Esophagus muscularis mucosa (tissue), 4 donors: ENCODE measurements at regions of chr5 and their contacts with region 1.

Region 1: DNA sequence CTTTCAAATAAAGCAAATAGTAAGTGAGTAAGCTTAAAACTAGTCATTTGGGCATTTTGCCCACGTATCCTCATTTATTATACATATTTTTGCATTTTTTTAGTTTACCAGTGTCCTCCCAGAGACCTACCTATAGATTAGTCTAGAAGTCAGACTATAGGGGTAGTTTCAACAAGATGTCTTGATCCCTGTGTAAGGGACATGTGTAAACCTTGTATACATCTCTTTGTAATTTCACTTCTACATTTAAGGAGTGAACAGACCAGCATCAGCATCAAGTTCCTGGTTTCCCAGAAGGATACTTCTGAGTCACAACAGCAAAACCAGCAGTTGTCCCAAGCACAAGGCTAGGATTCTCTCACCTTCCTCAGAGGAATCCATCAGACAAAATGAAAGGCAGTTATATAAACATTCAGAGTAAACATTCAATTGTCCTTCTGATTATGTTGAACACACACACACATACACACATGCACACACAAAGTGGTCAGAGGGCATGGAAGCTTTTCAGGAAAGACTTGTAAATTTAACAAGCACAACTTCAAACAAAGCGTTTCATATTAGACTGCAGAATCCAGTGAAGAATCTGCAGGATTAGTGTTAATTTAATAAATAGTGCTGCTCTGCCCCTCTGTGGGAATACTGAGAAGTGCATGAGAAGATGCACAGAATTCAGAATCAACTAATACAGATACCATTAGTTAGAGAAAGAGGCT is 55.4 kb downstream of the HINT1 start:
- DNase-seq: no peak
- H3K4me3 ChIP-seq: no peak overlapping the region
- H3K27ac ChIP-seq: no peak overlapping the region
- H3K4me1 ChIP-seq: no peaks in the 10 kb centered on the region
- H3K27me3 ChIP-seq: peaks cover 0 to 7% (median 0%) of the 10 kb centered on the region in 4 donors
- CTCF ChIP-seq: peak; percentile 55 to 71 (median 61)
- EP300 ChIP-seq: no peak
- POLR2A ChIP-seq: no peak

Region 2: GRCh38 chr5:129904102-129904666 is 1205.5 kb before region 1 on chr5 and contains the start of gene CHSY3:
- intact Hi-C with region 1: loop called (anchors 10 kb)
- DNase-seq: no peak
- H3K4me3 ChIP-seq: peak within 1 kb of the TSS; percentile 67 to 86 (median 74)
- H3K27ac ChIP-seq: peak within 1 kb of the TSS; percentile 74 to 81 (median 78)
- H3K4me1 ChIP-seq: peaks cover 14 to 30% (median 25%) of the 10 kb centered on the region in 4 donors
- H3K27me3 ChIP-seq: peaks cover 4 to 32% (median 13%) of the 10 kb centered on the region in 4 donors
- CTCF ChIP-seq: peak in 2 of 3 experiments; percentile 14 to 34
- EP300 ChIP-seq: no peak
- POLR2A ChIP-seq: no peak
- total RNA-seq, gene CHSY3: 1.2 to 2.1 (median 1.7) TPM

Region 3: GRCh38 chr5:130616161-130616560 is 493.5 kb before region 1 on chr5:
- intact Hi-C with region 1: no loop called
- DNase-seq: no peak
- H3K4me3 ChIP-seq: no peak overlapping the region
- H3K27ac ChIP-seq: no peak overlapping the region
- H3K4me1 ChIP-seq: no peaks in the 10 kb centered on the region
- H3K27me3 ChIP-seq: no peaks in the 10 kb centered on the region
- CTCF ChIP-seq: no peak
- EP300 ChIP-seq: no peak
- POLR2A ChIP-seq: no peak

Region 4: GRCh38 chr5:130912088-130912487 is 197.6 kb before region 1 on chr5:
- intact Hi-C with region 1: no loop called
- DNase-seq: no peak
- H3K4me3 ChIP-seq: no peak overlapping the region
- H3K27ac ChIP-seq: no peak overlapping the region
- H3K4me1 ChIP-seq: no peaks in the 10 kb centered on the region
- H3K27me3 ChIP-seq: no peaks in the 10 kb centered on the region
- CTCF ChIP-seq: no peak
- EP300 ChIP-seq: no peak
- POLR2A ChIP-seq: no peak

Region 5: DNA sequence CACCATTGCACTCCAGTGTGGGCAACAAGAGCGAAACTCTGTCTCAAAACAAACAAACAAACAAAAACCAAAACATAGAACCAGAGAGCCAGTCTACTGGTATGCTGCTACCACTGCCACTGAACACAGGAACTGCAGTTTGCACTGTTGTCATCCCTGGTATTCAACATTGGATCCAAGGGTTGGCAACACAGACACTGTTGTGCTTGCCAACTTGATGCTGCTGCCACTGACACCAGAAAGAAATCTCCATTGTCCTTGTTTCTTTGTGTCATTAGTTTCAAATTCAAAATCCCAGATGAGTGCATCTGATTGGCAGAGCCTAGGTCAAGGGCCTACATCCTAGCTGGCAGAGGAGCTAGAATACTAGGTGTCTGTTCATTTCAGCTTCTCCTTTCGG is 39.1 kb after region 1 on chr5:
- intact Hi-C with region 1: no loop called
- DNase-seq: no peak
- H3K4me3 ChIP-seq: no peak overlapping the region
- H3K27ac ChIP-seq: no peak overlapping the region
- H3K4me1 ChIP-seq: no peaks in the 10 kb centered on the region
- H3K27me3 ChIP-seq: no peaks in the 10 kb centered on the region
- CTCF ChIP-seq: no peak
- EP300 ChIP-seq: no peak
- POLR2A ChIP-seq: no peak